H1 (cell line): ENCODE measurements at regions of chr6 and their contacts with region 1.

Region 1: DNA sequence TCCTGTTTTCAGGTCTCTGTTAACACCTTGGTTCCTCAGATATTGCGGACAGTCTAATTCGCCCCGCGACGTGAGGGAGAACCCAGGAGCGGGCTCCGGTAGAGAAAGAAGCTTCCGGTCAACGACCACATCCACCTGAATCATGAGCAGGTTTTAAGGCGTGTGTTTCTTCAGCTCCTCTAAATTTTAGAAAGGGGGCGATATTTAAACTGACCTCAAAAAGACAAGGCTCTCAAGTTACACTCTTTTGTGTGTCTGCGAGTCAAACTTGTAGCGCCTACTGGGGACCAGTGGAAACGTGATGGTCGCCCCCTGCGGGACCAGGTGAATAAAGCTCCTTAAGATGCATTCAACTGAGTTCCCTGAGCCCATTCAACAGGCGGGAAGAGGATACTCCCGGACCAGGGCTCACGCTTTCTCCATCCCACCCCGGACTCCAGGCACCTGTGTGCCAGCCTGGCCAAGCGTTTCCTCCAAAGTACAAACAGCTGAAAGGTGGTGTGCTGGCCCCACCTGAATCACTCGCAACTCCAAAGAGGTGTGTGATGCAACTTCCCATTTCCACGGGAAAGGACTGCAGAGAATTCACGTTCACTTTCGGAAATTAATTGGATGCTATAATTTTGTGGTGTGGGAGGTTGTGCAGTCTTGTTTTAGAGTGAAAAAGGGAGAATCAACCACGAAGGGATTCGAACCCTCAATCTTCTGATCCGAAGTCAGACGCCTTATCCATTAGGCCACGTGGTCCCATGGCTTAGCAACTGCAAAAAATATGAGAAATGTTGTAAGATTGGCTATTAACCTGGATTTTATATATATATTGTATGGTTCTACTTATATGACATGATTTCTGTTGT is 17.0 kb downstream of the GPX5 start:
- DNase-seq: peak; percentile 88 to 94
- H3K4me3 ChIP-seq: peak overlapping the region; percentile 54 to 80 (median 74)
- H3K27ac ChIP-seq: peak overlapping the region; percentile 59; the same call in 1 of the 2 replicates
- H3K4me1 ChIP-seq: peaks cover 0 to 6% (median under 1%) of the 10 kb centered on the region in 4 experiments; a peak in 4 of 7 replicates
- H3K27me3 ChIP-seq: no peaks in the 10 kb centered on the region
- CTCF ChIP-seq: peak; percentile 71 to 98 (median 86)
- EP300 ChIP-seq: peak in 1 of 2 experiments; percentile 26; a peak in 1 of 3 replicates
- POLR2A ChIP-seq: peak; percentile 70 to 73
- RAD21 ChIP-seq: peak; percentile 58 to 68

Region 2: GRCh38 chr6:28449056-28449455 is 93.6 kb before region 1 on chr6:
- CTCF ChIA-PET with region 1: no interaction called
- POLR2A ChIA-PET with region 1: no interaction called
- DNase-seq: no peak
- H3K4me3 ChIP-seq: no peak overlapping the region
- H3K27ac ChIP-seq: no peak overlapping the region
- H3K4me1 ChIP-seq: no peaks in the 10 kb centered on the region
- H3K27me3 ChIP-seq: no peaks in the 10 kb centered on the region
- CTCF ChIP-seq: no peak
- EP300 ChIP-seq: no peak
- POLR2A ChIP-seq: no peak
- RAD21 ChIP-seq: no peak

Region 3: GRCh38 chr6:28553986-28554881 is 11.6 kb after region 1 on chr6:
- CTCF ChIA-PET with region 1: interaction called, 17 read pairs
- POLR2A ChIA-PET with region 1: interaction called, 3 read pairs
- DNase-seq: no peak
- H3K4me3 ChIP-seq: peak overlapping the region; percentile 42 to 65 (median 49)
- H3K27ac ChIP-seq: no peak overlapping the region
- H3K4me1 ChIP-seq: peaks cover 0 to 6% (median 3%) of the 10 kb centered on the region in 4 experiments; a peak in 3 of 7 replicates
- H3K27me3 ChIP-seq: peaks cover 1 to 32% (median 20%) of the 10 kb centered on the region in 4 experiments
- CTCF ChIP-seq: no peak
- EP300 ChIP-seq: no peak
- POLR2A ChIP-seq: no peak
- RAD21 ChIP-seq: no peak

Region 4: DNA sequence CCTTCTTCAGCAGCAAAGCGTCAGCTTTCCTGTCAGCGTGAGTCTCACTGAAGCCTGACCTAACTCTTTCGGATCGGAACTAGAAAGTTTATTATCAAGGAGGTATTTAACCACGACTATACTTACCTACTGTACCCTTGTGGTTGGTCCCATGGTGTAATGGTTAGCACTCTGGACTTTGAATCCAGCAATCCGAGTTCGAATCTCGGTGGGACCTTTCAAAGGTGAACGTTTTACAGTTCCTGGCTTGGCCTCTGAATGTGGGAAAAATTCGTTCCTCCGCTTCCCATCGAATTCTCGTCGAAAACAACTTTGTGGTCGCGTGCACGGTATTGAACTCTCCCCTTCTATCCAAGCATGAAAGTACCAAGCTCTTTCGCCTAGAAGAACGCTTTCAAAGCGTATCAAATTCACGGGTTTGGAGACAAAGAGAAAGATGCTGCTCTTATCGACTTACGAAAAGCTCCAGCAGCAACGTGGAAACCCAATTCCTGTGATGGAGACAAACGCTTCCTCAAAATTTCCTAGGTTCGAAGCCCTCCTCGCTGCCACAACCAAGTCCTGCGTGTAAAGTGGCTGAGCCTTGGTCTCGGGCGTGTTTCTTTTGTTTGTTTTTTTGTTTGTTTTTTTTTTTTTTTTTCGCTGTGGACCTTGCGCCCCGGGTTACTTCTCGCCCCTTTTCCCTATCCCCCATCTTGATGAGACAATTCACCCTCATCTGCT is 46.7 kb after region 1 on chr6:
- CTCF ChIA-PET with region 1: interaction called, 8 read pairs
- POLR2A ChIA-PET with region 1: interaction called, 10 read pairs
- DNase-seq: peak; percentile 90 to 95
- H3K4me3 ChIP-seq: peak overlapping the region; percentile 69 to 97 (median 74)
- H3K27ac ChIP-seq: no peak overlapping the region
- H3K4me1 ChIP-seq: peaks cover 0 to 3% (median 1%) of the 10 kb centered on the region in 4 experiments; a peak in 4 of 7 replicates
- H3K27me3 ChIP-seq: peaks cover 0 to 2% (median under 1%) of the 10 kb centered on the region in 4 experiments; a peak in 3 of 7 replicates
- CTCF ChIP-seq: no peak
- EP300 ChIP-seq: 0 out of 3 replicates have a peak, but pooled peaks of 1 of the 2 experiments have one; percentile 16
- POLR2A ChIP-seq: no peak
- RAD21 ChIP-seq: no peak; a peak in 1 of 4 replicates